ENCODE measurements at regions of chr3 and their contacts with region 1.

Region 1: DNA sequence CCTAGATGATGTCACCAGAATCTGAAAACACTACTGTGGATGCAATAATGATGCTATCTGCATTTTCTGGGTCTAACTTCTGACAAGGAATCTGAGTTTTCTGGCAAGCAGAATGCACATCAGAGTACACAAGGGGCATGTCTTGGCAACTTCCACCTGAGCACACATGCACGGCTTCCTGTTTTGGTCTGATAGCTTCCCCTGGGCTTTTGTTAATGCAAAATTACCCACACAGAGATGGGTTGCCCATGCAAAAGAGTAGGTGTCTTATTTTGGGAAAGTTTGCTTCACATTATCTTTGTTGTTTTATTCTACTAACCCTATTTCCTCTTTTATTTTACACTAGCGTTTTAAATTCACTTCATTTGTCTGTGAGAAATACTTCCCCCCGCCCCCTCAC is 74.2 kb upstream of the SATB1 start:
- DNase-seq: no peak
- ATAC-seq: peak; percentile 97
- H3K4me3 Mint-ChIP-seq: peak overlapping the region; percentile 29
- H3K27ac Mint-ChIP-seq: peak overlapping the region; percentile 57
- H3K4me1 Mint-ChIP-seq: peaks cover 43% of the 10 kb centered on the region
- H3K27me3 Mint-ChIP-seq: no peaks in the 10 kb centered on the region
- CTCF ChIP-seq: no peak

Region 2: DNA sequence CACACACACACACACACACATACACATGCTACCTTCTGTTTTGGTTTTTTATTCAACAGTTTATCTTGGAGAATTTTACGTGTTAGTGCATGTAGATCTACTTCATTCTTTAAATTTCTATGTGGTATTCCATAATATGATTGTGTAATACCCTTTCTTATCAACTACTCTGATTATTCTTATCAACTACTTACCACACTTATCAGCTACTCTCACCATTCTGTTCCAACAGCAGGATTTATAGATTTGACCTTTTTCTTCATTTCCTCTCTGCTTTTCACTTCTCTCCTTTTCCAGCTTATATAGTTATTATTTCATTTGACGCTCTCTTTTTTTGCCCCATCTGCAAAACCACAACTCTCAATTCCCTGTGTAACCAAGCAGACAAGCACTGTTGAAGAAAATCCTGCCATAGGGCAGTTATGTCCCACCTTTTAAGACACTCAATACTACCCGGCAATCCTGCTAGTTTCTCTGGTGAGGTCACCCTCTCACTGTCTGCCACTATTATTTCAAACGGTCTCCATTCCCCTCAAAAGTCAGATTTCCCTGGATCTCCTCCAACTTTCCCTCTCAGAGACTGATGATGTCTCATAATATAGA is 17.3 kb before region 1 on chr3:
- CTCF ChIA-PET with region 1: no interaction called
- POLR2A ChIA-PET with region 1: no interaction called
- intact Hi-C with region 1: loop called (anchors 2 kb)
- DNase-seq: no peak
- ATAC-seq: no peak
- H3K4me3 Mint-ChIP-seq: no peak overlapping the region
- H3K27ac Mint-ChIP-seq: no peak overlapping the region
- H3K4me1 Mint-ChIP-seq: peaks cover 11% of the 10 kb centered on the region
- H3K27me3 Mint-ChIP-seq: no peaks in the 10 kb centered on the region
- CTCF ChIP-seq: no peak

Region 3: GRCh38 chr3:18531662-18532236 is 32.4 kb after region 1 on chr3:
- CTCF ChIA-PET with region 1: no interaction called
- POLR2A ChIA-PET with region 1: interaction called, 3 read pairs
- intact Hi-C with region 1: loop called (anchors 1 kb)
- DNase-seq: no peak
- ATAC-seq: peak; percentile 97
- H3K4me3 Mint-ChIP-seq: no peak overlapping the region
- H3K27ac Mint-ChIP-seq: peak overlapping the region; percentile 37
- H3K4me1 Mint-ChIP-seq: peaks cover 49% of the 10 kb centered on the region
- H3K27me3 Mint-ChIP-seq: no peaks in the 10 kb centered on the region
- CTCF ChIP-seq: no peak